HCT116 (cell line): ENCODE measurements at regions of chr5 and their contacts with region 1.

Region 1: GRCh38 chr5:149035372-149035790 is 27.5 kb downstream of the SH3TC2 start:
- DNase-seq: peak; percentile 48
- ATAC-seq: peak; percentile 96
- H3K4me3 ChIP-seq: no peak overlapping the region
- H3K27ac ChIP-seq: no peak overlapping the region
- H3K4me1 ChIP-seq: peaks cover 0 to 14% of the 10 kb centered on the region in 2 experiments; a peak in 1 of 4 replicates
- H3K27me3 ChIP-seq: no peaks in the 10 kb centered on the region
- CTCF ChIP-seq: peak; percentile 89 to 92 (median 90)
- POLR2A ChIP-seq: no peak
- RAD21 ChIP-seq: peak; percentile 96

Region 2: DNA sequence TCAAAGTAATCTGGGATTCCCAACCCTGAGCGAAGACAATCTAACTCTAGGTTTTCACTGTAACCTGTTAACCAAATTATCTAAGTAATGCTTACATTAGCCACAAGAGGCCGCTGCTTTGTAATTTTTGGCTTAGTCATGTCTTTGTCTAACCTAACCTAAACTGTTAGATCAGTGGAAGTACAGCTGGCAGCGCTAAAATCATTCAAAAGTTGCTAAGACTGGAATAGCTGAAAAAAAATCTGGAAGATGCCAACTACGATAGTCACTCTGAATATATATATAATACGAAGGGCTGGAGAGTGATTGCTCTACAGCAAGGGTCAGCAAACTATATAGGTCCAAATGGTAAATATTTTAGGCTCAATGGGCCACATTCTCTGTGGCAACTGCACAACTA is 591.4 kb before region 1 on chr5:
- CTCF ChIA-PET with region 1: no interaction called
- POLR2A ChIA-PET with region 1: no interaction called
- RAD21 ChIA-PET with region 1: no interaction called
- intact Hi-C with region 1: loop called (anchors 10 kb)
- DNase-seq: peak; percentile 45
- ATAC-seq: peak; percentile 86
- H3K4me3 ChIP-seq: no peak overlapping the region
- H3K27ac ChIP-seq: no peak overlapping the region
- H3K4me1 ChIP-seq: no peaks in the 10 kb centered on the region
- H3K27me3 ChIP-seq: peaks cover 5% of the 10 kb centered on the region
- CTCF ChIP-seq: peak; percentile 52 to 82 (median 78)
- POLR2A ChIP-seq: no peak
- RAD21 ChIP-seq: peak; percentile 77

Region 3: GRCh38 chr5:148820461-148821395 is 214.7 kb before region 1 on chr5:
- CTCF ChIA-PET with region 1: interaction called, 14 read pairs
- POLR2A ChIA-PET with region 1: no interaction called
- RAD21 ChIA-PET with region 1: no interaction called
- intact Hi-C with region 1: loop called (anchors 10 kb)
- DNase-seq: peak; percentile 31
- ATAC-seq: peak; percentile 83
- H3K4me3 ChIP-seq: no peak overlapping the region
- H3K27ac ChIP-seq: no peak overlapping the region
- H3K4me1 ChIP-seq: peaks cover 5 to 6% of the 10 kb centered on the region in 2 experiments; a peak in 2 of 4 replicates
- H3K27me3 ChIP-seq: no peaks in the 10 kb centered on the region
- CTCF ChIP-seq: peak; percentile 60 to 78 (median 78); a peak in 5 of 6 replicates
- POLR2A ChIP-seq: no peak
- RAD21 ChIP-seq: peak; percentile 49

Region 4: DNA sequence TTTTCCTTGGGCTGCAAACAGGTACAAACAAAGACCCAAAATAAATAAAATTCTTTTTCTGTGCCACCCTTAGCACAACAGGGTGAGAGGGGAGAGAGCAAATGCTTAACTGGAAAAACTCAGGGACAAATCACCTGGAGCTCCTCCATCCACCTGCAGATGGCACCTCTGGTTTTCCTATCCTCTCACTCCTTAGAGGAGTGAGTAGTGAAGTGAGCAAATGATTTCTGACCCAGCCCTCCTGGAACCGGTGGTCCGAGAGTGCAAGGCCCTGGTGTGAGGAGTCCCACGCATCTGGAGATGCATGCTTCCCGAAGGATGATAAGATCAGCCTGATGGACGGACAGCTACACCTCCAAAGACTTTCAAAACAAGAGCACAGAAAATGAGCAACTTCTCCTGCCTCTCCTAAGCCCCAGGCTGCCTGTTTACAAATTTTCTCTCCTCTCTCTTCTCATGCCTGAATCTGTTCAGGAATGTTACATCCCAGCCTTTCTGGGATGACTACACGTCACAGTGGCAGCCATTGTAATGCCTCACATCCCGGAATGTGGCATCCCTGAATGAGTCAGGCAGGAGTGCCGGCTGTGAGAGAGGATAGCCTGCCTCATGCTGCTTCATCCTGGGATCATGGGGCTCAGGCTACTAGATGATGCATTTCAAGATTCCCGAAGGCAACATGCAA is 122.5 kb before region 1 on chr5:
- CTCF ChIA-PET with region 1: interaction called, 3 read pairs
- POLR2A ChIA-PET with region 1: no interaction called
- RAD21 ChIA-PET with region 1: interaction called in 1 of 2 experiments, 3 read pairs
- intact Hi-C with region 1: loop called (anchors 1 kb)
- DNase-seq: peak; percentile 54
- ATAC-seq: peak; percentile 75
- H3K4me3 ChIP-seq: peak overlapping the region in 1 of 2 experiments; percentile 36; a peak in 1 of 4 replicates
- H3K27ac ChIP-seq: peak overlapping the region; percentile 19; the same call in 1 of the 2 replicates
- H3K4me1 ChIP-seq: peaks cover 21 to 65% of the 10 kb centered on the region in 2 experiments
- H3K27me3 ChIP-seq: no peaks in the 10 kb centered on the region
- CTCF ChIP-seq: peak; percentile 52 to 67 (median 58); a peak in 5 of 6 replicates
- POLR2A ChIP-seq: no peak
- RAD21 ChIP-seq: peak; percentile 82

Region 5: DNA sequence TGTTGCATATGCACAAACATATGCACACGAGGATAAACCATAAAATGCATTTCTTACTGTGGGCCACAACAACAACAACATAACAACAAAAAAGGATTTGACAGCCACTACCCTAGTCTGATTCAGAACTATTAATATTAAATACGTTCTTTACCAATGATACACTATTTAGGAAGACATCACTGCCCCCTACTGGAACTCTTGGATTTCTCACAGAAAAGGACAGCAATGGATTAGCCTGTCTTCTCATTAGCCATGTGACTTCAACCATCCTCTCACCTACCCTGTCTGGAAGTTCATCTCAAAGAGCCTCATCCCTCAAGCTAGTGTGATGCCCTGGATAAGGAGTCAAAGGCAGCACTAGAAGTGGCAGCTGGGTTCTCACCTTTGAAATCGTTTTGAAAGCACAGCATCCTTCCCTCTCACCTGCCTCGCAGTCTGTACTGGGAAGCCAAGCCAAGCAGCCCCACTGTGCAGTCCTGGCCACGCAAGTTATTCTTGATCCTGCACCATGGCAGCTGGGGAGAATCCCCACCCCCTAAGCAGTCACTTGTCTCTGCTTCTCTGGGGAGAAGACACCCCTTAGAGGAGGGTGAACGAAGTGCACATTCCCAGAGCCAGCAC is 37.1 kb before region 1 on chr5:
- CTCF ChIA-PET with region 1: interaction called, 12 read pairs
- POLR2A ChIA-PET with region 1: no interaction called
- RAD21 ChIA-PET with region 1: no interaction called
- intact Hi-C with region 1: no loop called
- DNase-seq: peak; percentile 63
- ATAC-seq: peak; percentile 82
- H3K4me3 ChIP-seq: no peak overlapping the region
- H3K27ac ChIP-seq: no peak overlapping the region
- H3K4me1 ChIP-seq: peaks cover 8 to 20% of the 10 kb centered on the region in 2 experiments
- H3K27me3 ChIP-seq: no peaks in the 10 kb centered on the region
- CTCF ChIP-seq: peak; percentile 63 to 81 (median 80)
- POLR2A ChIP-seq: no peak
- RAD21 ChIP-seq: peak; percentile 91